Activated T-helper 2 cell treated with anti-CD3 and anti-CD28 coated beads, Interferon-gamma antibody, Interleukin-2, Interleukin-4, amounts not matched to agents 10 μg/mL and 5 μg/mL and 100 μg/mL, durations not matched to agents 14 hours and 24 hours and 36 hours (primary cell): ENCODE measurements at regions of chr10 and their contacts with region 1.

Region 1: GRCh38 chr10:110395725-110396651 is 91.3 kb upstream of the SMNDC1 start:
- DNase-seq: no peak
- H3K4me3 Mint-ChIP-seq: no peak overlapping the region
- H3K27ac Mint-ChIP-seq: peak overlapping the region; percentile 78
- H3K4me1 Mint-ChIP-seq: peaks cover 56% of the 10 kb centered on the region
- H3K27me3 Mint-ChIP-seq: no peaks in the 10 kb centered on the region

Region 2: DNA sequence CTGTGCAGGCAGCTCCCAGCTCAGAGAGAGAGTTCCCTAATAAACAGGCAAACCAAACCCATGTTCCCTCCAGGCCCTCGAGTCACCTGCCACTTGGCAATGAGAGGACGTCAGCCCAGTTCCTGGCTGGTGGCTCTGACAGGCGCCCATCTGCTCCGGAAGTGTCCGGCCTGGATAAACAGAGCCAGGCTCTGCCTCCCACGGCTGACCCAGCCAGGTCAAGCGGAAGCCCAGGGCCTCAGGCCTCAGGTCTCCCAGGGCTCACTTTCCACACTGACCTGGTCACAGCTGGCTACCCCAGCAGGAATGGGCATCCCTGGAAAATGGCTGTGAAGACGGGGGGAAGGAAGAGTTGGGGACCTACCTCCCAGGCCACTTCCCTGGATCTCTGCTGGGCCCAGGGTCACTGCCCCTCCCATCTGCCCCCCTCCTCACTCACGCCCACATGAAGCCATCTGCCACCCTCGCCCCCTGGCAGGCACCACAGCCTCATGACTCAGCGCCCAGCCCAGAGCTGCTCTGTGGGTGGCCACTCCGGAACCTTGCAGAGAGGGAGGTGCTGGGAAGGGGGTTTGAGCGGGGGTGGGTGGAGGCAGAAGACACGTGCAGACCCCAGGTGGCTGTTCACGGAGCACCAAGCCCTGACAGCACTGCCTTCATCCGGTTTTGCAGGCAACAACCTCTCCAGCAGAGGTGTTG is 64.3 kb after region 1 on chr10:
- intact Hi-C with region 1: loop called (anchors 5 kb)
- DNase-seq: no peak
- H3K4me3 Mint-ChIP-seq: no peak overlapping the region
- H3K27ac Mint-ChIP-seq: no peak overlapping the region
- H3K4me1 Mint-ChIP-seq: peaks cover 46% of the 10 kb centered on the region
- H3K27me3 Mint-ChIP-seq: no peaks in the 10 kb centered on the region